AG04450 (cell line): ENCODE measurements at regions of chr12 and their contacts with region 1.

Region 1: DNA sequence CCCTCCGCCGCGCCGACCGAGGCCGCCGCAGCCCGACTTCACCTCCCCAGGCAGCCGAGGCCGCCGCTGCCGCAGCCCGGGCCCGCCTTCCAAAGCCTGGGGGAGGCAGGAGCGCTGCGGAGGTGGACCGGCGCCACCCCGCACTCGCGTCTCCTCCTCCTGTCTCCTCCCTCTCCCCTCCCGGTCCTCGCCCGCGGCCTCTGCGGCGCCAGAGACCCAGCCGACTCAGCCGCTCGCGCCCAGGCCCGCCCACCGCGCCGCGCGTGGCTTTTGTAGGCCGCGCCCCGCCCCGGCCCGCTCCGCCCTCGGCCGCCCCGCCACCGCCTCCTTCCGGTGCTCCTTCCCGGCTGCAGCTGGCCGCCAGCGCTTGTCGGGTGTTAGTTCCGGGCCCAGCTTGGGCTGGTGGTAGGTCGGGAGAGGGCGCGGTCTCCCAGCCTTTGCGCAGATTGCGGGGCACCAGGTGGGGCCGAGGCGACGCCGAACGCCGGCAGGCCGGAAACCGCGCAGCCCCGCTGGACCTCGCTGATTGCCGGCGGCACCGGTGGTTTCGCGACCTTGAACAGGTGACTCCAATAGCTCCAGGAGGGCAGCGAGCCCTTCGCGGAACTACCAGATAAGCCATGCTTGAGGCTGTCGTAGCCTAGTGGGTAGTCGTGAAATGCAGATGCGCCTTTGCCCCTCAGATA is at the start of gene CAPRIN2:
- DNase-seq: peak; percentile 81
- H3K4me3 ChIP-seq: peak within 1 kb of the TSS; percentile 84
- H3K27ac ChIP-seq: peak within 1 kb of the TSS; percentile 60
- H3K27me3 ChIP-seq: no peaks in the 10 kb centered on the region
- CTCF ChIP-seq: peak; percentile 21
- polyA plus RNA-seq, gene CAPRIN2: 13.7 and 15.6 TPM in 2 replicates

Region 2: GRCh38 chr12:30732954-30733637 is 21.8 kb before region 1 on chr12:
- CTCF ChIA-PET with region 1: interaction called, 11 read pairs
- POLR2A ChIA-PET with region 1: no interaction called
- DNase-seq: no peak
- H3K4me3 ChIP-seq: no peak overlapping the region
- H3K27ac ChIP-seq: no peak overlapping the region
- H3K27me3 ChIP-seq: no peaks in the 10 kb centered on the region
- CTCF ChIP-seq: no peak

Region 3: GRCh38 chr12:30795410-30796312 is 40.8 kb after region 1 on chr12:
- CTCF ChIA-PET with region 1: interaction called, 5 read pairs
- POLR2A ChIA-PET with region 1: interaction called, 15 read pairs
- DNase-seq: no peak
- H3K4me3 ChIP-seq: peak overlapping the region; percentile 77
- H3K27ac ChIP-seq: peak overlapping the region; percentile 96
- H3K27me3 ChIP-seq: no peaks in the 10 kb centered on the region
- CTCF ChIP-seq: peak; percentile 10; the same call in 1 of the 2 replicates

Region 4: GRCh38 chr12:30806989-30807694 is 52.3 kb after region 1 on chr12:
- CTCF ChIA-PET with region 1: interaction called, 19 read pairs
- POLR2A ChIA-PET with region 1: no interaction called
- DNase-seq: no peak
- H3K4me3 ChIP-seq: no peak overlapping the region
- H3K27ac ChIP-seq: no peak overlapping the region
- H3K27me3 ChIP-seq: no peaks in the 10 kb centered on the region
- CTCF ChIP-seq: peak; percentile 80

Region 5: DNA sequence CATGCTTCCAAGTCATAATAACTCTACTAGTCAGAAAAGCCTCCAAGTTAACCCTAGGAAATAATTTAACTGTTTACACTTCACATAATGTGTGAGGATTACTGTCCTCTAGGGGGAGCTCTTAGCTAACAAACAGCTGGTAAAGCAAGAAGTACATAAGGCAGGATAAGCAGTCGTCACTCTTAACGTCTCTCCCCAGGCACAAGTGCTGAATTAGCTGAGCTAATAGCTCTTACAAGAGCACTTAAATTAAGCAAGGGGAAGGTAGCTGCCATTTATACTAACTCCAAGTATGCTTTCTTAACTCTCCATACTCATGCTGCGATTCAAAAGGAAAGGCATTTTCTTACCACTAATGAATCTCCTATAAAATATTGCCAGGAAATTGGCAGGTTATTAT is 92.4 kb after region 1 on chr12:
- CTCF ChIA-PET with region 1: interaction called, 10 read pairs
- POLR2A ChIA-PET with region 1: no interaction called
- DNase-seq: peak; percentile 8
- H3K4me3 ChIP-seq: no peak overlapping the region
- H3K27ac ChIP-seq: no peak overlapping the region
- H3K27me3 ChIP-seq: peaks cover 3% of the 10 kb centered on the region
- CTCF ChIP-seq: peak; percentile 71